Gastrocnemius medialis (tissue), 4 donors: ENCODE measurements at regions of chr12 and their contacts with region 1.

Region 1: DNA sequence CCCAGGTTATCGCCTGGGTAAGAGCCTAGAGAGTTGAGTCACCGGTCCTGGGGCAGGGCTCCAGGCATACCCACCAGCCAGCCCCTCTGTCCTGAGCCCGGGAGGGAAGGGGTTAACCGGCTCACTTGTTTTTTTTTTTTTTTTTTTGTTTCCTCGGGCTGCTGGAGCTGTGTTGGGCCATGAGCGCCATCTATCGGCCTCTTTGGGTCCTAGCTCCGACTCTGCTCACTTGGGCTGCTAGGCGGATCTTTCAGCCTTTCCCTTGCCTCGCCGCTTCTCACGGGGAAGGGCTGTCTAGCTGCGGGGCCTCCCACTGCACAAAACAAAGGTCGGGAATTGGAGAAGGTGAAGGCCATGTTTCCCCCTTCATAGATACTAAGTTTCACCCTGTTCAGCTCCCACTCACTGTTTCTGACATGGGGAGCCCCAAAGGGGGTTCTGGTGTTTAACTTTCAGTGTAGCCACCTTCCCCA is 2.8 kb upstream of the SMUG1 start:
- DNase-seq: peak; percentile 66 to 84
- ATAC-seq: peak; percentile 67 to 76
- H3K4me3 ChIP-seq: peak overlapping the region in 1 of 4 donors; percentile 10
- H3K27ac ChIP-seq: peak overlapping the region; percentile 52 to 75 (median 72)
- H3K4me1 ChIP-seq: peaks cover 26 to 38% of the 10 kb centered on the region in 2 donors
- H3K27me3 ChIP-seq: no peaks in the 10 kb centered on the region
- CTCF ChIP-seq: peak; percentile 80 to 89 (median 82)
- POLR2A ChIP-seq: no peak

Region 2: GRCh38 chr12:54005853-54006686 is 185.5 kb before region 1 on chr12:
- in situ Hi-C with region 1: no loop called
- intact Hi-C with region 1: loop called (anchors 1 kb)
- DNase-seq: peak; percentile 83 to 91
- ATAC-seq: peak; percentile 63 to 67
- H3K4me3 ChIP-seq: peak overlapping the region; percentile 24 to 82 (median 63)
- H3K27ac ChIP-seq: peak overlapping the region; percentile 94 to 100 (median 98)
- H3K4me1 ChIP-seq: peaks cover 31 to 64% of the 10 kb centered on the region in 2 donors
- H3K27me3 ChIP-seq: no peaks in the 10 kb centered on the region
- CTCF ChIP-seq: peak; percentile 91 to 99 (median 97)
- POLR2A ChIP-seq: no peak

Region 3: DNA sequence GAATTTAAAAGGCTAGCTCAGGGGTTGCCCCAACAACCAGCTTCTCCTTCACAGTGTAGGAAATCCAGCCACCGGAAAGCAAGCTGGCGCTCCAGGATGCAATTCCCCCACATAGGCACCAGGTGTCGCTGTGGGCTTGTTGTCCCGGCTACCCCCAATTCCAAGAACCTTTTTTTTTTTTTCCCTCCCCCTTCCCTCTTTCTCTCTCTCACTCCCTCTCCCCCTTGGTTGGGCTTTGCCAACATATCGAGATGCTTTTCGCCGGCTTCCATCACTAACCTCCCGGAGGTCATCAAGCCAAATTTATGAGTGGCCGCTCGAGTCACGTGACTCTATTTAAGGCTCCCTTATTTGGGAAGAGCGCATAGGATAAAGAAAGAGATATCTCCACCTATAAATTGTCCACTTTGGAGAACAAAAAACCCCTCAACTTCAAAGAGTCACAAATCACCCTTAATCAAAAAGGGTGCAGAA is 158.9 kb before region 1 on chr12 and contains the start of gene HOXC5:
- in situ Hi-C with region 1: loop called in 3 of 4 experiments (anchors 5 to 10 kb)
- intact Hi-C with region 1: loop called (anchors 1 kb)
- DNase-seq: peak in 1 of 2 donors; percentile 78
- ATAC-seq: peak; percentile 37 to 49
- H3K4me3 ChIP-seq: peak within 1 kb of the TSS; percentile 64 to 85 (median 68)
- H3K27ac ChIP-seq: peak within 1 kb of the TSS; percentile 94 to 100 (median 98)
- H3K4me1 ChIP-seq: peaks cover 13 to 27% of the 10 kb centered on the region in 2 donors
- H3K27me3 ChIP-seq: no peaks in the 10 kb centered on the region
- CTCF ChIP-seq: peak; percentile 93 to 97 (median 96)
- POLR2A ChIP-seq: no peak
- total RNA-seq, gene HOXC5: 0.36 to 1.4 TPM in 2 of 4 donors, not detected in the others